IMR-90 (cell line): ENCODE measurements at regions of chr12 and their contacts with region 1.

Region 1: GRCh38 chr12:936377-937345 is 12.8 kb downstream of the RAD52 start:
- DNase-seq: no peak
- ATAC-seq: no peak
- H3K4me3 ChIP-seq: no peak overlapping the region
- H3K27ac ChIP-seq: no peak overlapping the region
- H3K4me1 ChIP-seq: no peaks in the 10 kb centered on the region
- H3K27me3 ChIP-seq: no peaks in the 10 kb centered on the region
- CTCF ChIP-seq: no peak
- POLR2A ChIP-seq: no peak
- RAD21 ChIP-seq: no peak

Region 2: DNA sequence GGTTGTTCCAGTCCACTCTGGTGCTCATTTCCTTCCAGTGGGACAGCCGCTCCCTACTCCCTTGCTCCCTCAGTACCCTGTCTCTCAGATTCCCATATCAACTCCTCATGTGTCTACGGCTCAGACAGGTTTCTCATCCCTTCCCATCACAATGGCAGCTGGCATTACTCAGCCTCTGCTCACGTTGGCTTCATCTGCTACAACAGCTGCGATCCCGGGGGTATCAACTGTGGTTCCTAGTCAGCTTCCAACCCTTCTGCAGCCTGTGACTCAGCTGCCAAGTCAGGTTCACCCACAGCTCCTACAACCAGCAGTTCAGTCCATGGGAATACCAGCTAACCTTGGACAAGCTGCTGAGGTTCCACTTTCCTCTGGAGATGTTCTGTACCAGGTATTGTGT is 57.0 kb before region 1 on chr12:
- CTCF ChIA-PET with region 1: no interaction called
- POLR2A ChIA-PET with region 1: no interaction called
- dilution Hi-C with region 1: no loop called
- in situ Hi-C with region 1: no loop called
- intact Hi-C with region 1: loop called (anchors 10 kb)
- DNase-seq: peak; percentile 86
- ATAC-seq: peak; percentile 59
- H3K4me3 ChIP-seq: no peak overlapping the region
- H3K27ac ChIP-seq: no peak overlapping the region
- H3K4me1 ChIP-seq: no peaks in the 10 kb centered on the region
- H3K27me3 ChIP-seq: no peaks in the 10 kb centered on the region
- CTCF ChIP-seq: no peak
- POLR2A ChIP-seq: no peak
- RAD21 ChIP-seq: no peak